ENCODE measurements at regions of chr9 and their contacts with region 1.

Region 1: DNA sequence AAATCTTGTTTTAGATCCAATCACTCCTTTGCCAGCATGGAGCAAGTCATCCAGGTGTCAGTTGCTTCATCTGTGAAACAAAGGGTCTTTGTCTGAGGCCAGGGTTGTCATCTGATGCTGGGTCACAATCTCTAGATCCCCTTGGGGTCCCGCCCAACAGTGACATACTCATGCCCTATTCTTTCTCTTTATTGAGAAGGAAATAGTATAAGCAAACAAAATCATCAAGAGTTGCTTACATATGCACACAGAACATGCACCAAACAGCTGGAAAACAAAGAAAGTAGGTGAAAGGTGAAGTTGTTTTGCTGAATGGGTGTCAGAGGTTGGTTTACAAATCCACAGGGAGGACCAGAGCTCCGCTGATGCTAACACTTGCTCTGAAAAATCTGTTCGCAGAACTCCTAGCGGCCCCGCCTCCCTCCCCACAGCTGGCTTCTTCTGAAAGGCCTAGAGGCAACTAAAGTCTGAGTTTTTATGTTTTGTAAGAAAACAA is 106.1 kb upstream of the SLC44A1 start:
- DNase-seq: no peak
- H3K4me3 ChIP-seq: no peak overlapping the region
- H3K27ac ChIP-seq: no peak overlapping the region
- H3K4me1 ChIP-seq: peaks cover 0 to 18% (median 14%) of the 10 kb centered on the region in 4 experiments
- H3K27me3 ChIP-seq: no peaks in the 10 kb centered on the region

Region 2: DNA sequence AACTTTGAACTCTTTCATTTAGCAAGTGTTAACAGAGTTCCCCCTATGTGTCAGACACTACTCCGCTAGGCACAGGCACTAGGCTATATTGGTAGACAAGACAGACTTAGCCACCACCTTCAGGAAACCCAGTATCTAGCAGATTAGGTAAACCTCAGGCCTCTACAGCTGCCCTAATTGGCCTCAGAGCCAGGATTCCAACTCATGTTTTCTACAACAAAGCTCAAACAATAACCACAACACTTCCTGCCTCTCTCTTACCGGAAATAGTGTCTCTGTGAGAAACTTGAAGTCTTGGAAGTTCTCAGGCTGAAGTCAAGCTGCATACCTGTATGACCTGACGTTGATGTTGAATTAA is 10.5 kb before region 1 on chr9:
- CTCF ChIA-PET with region 1: interaction called, 11 read pairs
- POLR2A ChIA-PET with region 1: interaction called, 3 read pairs
- DNase-seq: peak; percentile 91 to 97 (median 95)
- H3K4me3 ChIP-seq: peak overlapping the region in 3 of 7 experiments; percentile 39 to 45 (median 45)
- H3K27ac ChIP-seq: no peak overlapping the region
- H3K4me1 ChIP-seq: peaks cover 5 to 33% (median 33%) of the 10 kb centered on the region in 4 experiments
- H3K27me3 ChIP-seq: peaks cover 0 to 2% (median 0%) of the 10 kb centered on the region in 5 experiments

Region 3: DNA sequence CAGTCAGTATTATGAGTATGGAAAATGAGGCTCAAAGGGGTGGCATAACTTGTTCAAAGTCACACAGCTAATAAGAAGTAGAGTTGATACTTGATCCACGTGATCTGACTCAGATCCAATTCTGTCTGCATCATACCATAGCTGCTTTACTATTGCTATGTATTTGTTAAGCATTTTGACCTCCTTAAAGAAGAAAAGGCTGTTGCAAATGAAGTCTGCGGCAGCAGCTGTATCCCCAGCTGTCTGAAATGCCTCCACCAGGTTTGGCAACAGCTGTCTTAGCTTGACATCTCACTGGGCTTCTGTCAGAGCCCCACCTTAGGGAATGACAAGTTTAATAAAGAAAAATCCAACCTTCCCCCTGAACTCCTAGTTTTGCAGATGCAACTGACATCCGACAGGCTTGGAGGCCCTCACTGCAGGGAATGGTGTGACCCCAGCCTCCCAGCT is 30.5 kb after region 1 on chr9:
- CTCF ChIA-PET with region 1: no interaction called
- POLR2A ChIA-PET with region 1: no interaction called
- DNase-seq: no peak
- H3K4me3 ChIP-seq: no peak overlapping the region
- H3K27ac ChIP-seq: no peak overlapping the region
- H3K4me1 ChIP-seq: no peaks in the 10 kb centered on the region
- H3K27me3 ChIP-seq: no peaks in the 10 kb centered on the region

Region 4: GRCh38 chr9:105191508-105192121 is 53.3 kb after region 1 on chr9:
- CTCF ChIA-PET with region 1: no interaction called
- POLR2A ChIA-PET with region 1: no interaction called
- DNase-seq: peak in 2 of 3 donors; percentile 5
- H3K4me3 ChIP-seq: no peak overlapping the region
- H3K27ac ChIP-seq: no peak overlapping the region
- H3K4me1 ChIP-seq: peaks cover 0 to 7% (median 0%) of the 10 kb centered on the region in 4 experiments
- H3K27me3 ChIP-seq: no peaks in the 10 kb centered on the region

Measured in common myeloid progenitor, CD34-positive (primary cell).